ENCODE measurements at regions of chr6 and their contacts with region 1.

Region 1: DNA sequence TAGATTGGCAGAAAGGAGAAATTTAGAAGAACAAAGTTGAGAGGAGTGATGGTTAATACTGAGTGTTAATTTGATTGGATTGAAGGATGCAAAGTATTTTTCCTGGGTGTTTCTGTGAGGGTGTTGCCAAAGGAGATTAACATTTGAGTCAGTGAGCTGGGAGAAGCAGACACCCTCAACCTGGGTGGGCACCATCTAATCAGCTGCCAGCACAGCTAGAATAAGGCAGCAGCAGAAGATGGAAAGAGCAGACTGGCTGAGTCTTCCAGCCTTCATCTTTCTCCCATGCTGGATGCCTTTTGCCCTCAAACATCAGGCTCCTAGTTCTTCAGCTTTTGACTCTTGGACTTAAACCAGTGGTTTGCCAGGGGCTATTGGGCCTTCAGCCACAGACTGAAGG is 437.7 kb upstream of the AGPAT4 start:
- DNase-seq: no peak

Region 2: DNA sequence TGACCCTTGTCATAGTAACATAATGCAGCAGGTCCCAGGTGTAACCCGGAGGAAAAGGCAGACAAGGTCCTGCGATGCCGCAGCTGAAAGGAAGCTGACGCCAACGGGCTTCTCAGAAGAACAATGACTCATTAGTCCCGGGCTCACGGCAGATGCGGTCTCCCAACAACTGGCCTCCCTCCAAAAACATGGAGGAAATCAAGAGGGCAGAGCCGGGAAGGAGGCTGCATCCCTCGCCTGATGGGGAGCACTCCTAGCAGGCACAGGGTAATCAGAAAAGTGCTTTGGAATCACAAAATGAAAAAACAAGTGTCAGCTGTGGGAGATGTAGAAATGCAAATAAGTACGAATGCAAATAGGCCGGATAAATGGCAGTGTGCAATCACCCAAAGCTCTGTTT is 272.4 kb before region 1 on chr6:
- CTCF ChIA-PET with region 1: interaction called, 11 read pairs
- POLR2A ChIA-PET with region 1: no interaction called
- DNase-seq: no peak